Activated T-helper 2 cell treated with anti-CD3 and anti-CD28 coated beads, Interferon-gamma antibody, Interleukin-2, Interleukin-4, amounts not matched to agents 10 μg/mL and 5 μg/mL and 100 μg/mL, durations not matched to agents 14 hours and 24 hours and 36 hours (primary cell): ENCODE measurements at regions of chr9 and their contacts with region 1.

Region 1: DNA sequence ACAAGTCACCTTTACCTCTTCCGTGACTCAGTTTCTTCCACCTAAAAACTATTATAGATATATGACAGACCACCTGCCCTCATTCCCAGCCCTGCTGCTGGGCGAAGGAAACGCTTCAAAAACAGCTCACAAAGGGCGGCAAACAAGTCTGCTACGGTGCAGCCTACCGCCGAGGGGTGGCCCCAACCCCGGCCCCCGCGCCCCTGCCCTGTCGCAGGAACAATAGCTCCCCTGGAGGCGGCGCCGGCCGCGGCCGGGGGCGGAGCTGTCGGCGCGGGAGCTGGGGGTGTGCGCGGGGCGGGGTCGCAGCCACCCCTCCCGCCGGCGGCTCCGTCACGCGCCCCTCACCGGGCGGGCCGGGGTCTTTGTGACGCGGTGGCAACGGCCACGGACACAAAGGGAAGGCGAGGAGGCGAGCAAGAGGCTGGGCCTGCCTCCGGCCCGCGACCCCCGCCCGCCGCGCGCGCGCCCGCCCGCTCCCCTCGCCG is at the start of gene TMEFF1:
- DNase-seq: peak; percentile 27
- H3K4me3 Mint-ChIP-seq: peak within 1 kb of the TSS; percentile 68
- H3K27ac Mint-ChIP-seq: no peak within 1 kb of the TSS
- H3K4me1 Mint-ChIP-seq: peaks cover 8% of the 10 kb centered on the region
- H3K27me3 Mint-ChIP-seq: peaks cover 45% of the 10 kb centered on the region
- total RNA-seq, gene TMEFF1: 0.52 and 1.1 TPM in 2 replicates

Region 2: GRCh38 chr9:100150214-100150613 is 322.6 kb before region 1 on chr9:
- intact Hi-C with region 1: no loop called
- DNase-seq: no peak
- H3K4me3 Mint-ChIP-seq: no peak overlapping the region
- H3K27ac Mint-ChIP-seq: no peak overlapping the region
- H3K4me1 Mint-ChIP-seq: no peaks in the 10 kb centered on the region
- H3K27me3 Mint-ChIP-seq: no peaks in the 10 kb centered on the region

Region 3: DNA sequence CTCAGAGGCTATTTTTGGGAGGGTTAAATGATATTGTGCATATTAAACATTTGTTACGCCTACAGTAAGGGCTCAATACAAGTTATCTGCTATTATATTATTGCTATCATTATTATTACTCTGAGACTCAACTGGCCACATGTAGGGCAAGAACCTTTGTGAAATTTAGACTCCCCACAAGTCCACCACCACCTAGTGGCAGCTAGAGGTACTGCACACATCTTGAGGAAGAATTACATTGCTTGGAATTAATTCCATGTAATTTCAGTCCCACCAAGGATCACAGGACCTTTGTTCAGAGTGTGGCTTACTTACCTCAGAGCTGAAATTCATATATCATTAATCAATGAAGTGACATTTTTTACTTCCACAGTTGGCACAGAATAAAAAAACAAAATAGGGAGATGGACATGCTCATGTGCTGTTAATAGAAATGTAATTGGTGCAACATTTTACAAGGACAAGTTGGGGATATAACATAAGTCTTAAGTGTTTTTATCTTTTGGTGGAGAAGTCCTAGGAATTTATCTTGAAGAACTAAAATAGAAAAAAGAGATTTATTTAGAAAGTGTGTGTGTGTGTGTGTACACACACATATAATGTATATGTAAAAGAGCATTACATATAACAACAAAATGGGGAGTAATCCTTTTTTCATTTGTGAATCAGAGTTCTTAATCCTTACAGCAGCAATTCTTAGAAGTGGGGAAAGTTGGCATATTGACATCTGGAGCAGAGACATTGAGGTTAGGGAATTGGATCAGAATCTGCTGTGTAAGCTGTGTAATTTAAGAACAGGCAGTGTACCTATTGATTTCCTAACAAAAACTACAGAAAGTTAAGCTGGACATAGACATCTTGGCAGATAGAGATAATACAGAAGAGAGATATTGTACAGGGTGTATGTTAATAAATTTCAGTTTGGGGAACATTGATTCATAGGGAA is 34.7 kb before region 1 on chr9:
- intact Hi-C with region 1: loop called (anchors 5 kb)
- DNase-seq: peak; percentile 41
- H3K4me3 Mint-ChIP-seq: no peak overlapping the region
- H3K27ac Mint-ChIP-seq: no peak overlapping the region
- H3K4me1 Mint-ChIP-seq: no peaks in the 10 kb centered on the region
- H3K27me3 Mint-ChIP-seq: no peaks in the 10 kb centered on the region